Head of caudate nucleus (tissue), 42 donors: ENCODE measurements at regions of chr4 and their contacts with region 1.

Region 1: DNA sequence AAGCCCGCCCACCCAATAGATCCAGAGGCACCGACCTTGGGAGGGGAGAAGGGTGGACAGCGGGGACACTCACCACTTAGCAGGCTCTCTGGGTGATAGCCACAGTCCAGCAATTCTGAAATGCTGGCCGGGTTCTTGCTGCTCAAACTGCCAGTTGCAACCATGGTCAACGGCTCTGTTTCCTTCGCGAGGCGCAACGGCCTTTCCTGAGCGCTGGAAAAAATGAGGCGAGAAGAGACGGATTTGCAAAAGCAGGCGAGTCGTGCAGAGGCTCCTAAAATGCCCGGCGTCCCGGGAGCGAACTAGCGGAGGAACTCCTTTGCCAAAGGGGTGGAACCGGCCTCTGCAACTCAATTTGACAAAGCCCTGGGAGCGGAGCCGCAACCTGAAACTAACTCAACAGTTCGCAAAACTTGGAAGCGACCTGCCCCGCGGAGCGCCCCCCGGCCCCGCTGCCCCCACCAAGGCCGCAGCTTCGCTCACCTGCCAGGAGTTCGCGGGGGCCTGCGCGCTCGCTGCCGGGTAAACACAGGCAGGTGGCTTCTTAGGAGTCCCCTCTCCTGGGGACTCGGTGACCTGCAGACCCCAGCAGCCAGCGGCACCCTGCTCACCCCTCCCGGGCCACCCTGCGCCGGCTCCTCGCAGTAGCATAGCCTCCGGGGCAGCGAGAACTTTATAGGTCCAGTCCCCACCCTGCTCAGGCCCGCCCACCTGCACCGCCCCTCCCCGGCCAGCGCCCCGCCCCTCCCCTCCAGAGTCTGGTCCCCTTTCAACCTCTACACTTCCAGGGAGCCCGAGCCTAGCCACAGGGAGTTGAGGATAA is at the start of gene DDIT4L:
- DNase-seq: peak in 41 of 42 donors; percentile 12 to 78 (median 50)

Region 2: DNA sequence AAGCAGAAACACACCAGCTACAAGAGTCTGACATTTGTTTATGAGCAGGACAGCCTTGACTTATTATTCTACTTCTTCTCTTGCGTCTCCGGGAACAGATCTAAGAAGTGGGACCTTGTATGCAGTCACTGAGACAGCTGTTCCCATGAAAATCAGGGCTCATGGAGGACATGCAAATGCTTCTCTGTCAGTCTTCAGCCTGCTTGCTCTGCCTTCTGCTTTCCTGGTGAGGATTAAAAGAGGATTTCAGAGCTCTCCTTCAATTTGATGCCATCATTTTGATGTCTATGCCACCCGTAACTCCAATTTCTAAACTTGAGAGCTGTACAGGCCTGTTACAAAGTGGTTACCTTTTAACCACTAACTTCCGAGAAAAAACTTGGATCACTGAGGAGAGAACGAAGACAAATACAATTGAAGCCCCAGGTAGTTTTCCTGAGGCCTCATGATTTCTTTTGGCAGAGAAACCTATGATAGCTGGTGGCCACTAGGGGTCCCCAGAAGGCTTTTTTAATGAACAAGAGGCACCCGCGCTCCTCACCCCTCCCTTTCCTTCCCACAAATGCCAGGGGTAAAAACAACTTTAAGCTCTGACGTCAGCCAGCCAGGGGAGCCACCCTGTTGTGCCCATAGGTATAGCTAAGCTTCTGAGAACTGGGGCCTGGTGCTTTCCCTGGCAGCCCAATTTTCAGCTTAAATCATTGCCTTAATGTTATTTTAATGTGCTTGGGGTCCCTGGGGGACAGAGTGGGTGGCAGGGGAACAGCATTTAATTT is 96.8 kb before region 1 on chr4:
- intact Hi-C with region 1: loop called (anchors 10 kb)
- DNase-seq: peak; percentile 57 to 96 (median 82)

Region 3: GRCh38 chr4:100117750-100118149 is 72.3 kb before region 1 on chr4:
- intact Hi-C with region 1: no loop called
- DNase-seq: no peak